ENCODE measurements at regions of chr11 and their contacts with region 1.

Region 1: GRCh38 chr11:113532697-113533424 is 57.7 kb upstream of the DRD2 start:
- DNase-seq: peak; percentile 55 to 88
- ATAC-seq: peak; percentile 86

Region 2: DNA sequence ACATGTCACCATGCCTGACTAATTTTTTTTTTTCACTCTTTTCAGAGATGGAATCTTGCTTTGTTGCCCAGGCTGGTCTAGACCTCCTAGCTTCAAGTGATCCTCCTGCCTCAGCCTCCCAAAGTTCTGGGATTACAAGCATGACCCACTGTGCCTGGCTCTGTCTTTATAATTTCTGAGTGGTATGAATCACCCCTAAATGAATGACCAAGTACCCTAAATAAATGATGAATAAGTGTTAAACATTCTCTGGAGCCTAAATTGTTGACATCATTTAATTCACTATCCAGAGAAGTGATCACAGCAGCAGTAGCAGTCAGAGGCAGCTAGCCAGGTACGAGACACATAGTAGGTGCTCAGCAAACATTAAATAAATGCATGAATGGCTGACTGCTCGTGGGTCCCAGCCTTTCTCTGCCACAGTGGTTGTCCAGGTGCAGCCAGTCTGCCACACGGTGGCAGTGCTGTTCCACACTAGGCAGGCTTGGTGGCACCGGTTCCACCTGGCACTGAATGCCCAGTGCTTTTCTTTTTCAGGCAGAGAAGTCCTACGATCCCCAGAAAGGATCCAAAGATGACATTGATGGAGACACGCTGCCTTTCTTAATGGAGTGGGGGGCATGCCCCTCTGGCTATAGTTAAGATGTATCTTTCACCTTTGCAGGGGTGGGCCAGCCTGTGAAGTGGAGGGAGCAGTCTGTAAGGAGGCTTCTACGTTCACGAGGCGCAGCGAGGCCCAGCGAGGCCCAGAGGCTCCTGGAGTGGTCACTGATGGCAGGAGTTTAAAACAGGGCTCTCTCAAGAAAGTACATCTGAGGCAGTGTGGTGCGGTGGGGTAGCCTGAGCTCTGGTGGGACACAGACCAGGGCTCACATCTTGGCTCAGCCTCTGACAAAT is 227.2 kb before region 1 on chr11:
- intact Hi-C with region 1: loop called in 1 of 2 experiments (anchors 5 kb)
- DNase-seq: peak; percentile 55 to 86
- ATAC-seq: peak; percentile 98

Region 3: GRCh38 chr11:113417428-113417827 is 115.4 kb before region 1 on chr11:
- intact Hi-C with region 1: no loop called
- DNase-seq: no peak
- ATAC-seq: no peak

Region 4: GRCh38 chr11:113447621-113448315 is 85.1 kb before region 1 on chr11:
- intact Hi-C with region 1: no loop called
- DNase-seq: no peak
- ATAC-seq: no peak

Region 5: DNA sequence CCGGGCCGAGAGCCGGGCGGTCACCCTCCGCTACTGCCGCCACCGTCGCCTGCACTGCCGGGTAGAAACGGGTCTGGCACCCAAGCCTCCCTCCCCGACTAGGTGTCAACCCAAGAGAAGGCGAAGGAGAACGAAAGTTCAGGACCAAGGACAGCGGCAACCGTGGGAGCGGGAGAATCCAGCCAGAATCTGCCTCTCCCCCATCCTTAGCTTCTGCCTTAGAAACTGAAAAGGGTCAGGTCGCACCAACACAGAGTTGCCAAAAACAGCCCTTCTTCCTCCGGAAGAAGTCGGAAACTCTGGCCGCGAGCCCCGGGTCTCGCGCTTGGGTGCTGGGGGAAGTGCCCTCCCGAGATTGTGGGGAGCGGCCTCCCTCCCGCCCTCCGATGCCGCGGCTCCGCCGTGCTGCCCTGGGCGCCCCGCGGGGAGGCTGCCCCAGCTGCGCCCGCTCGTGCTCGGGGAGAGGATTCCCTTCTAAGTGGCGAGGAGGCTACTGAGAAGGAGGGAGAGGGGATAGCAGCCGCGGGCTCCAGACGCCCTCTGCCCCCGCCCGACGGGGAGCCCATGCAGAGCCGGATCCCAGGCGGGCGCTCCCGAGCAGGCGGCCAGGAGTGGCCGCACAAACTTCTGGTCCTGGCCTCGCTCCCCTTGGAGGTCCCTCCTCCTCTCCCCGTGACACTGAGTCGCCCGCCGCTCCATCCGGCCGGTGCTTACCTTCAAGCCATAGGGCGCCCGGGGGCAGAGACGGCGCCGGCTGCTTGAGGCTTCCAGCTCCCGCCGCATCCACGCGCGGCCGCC is 58.3 kb before region 1 on chr11:
- intact Hi-C with region 1: loop called in 1 of 2 experiments (anchors 10 kb)
- DNase-seq: peak; percentile 63 to 79
- ATAC-seq: peak; percentile 89

Region 6: GRCh38 chr11:113730887-113731726 is 198.2 kb after region 1 on chr11:
- intact Hi-C with region 1: loop called in 1 of 2 experiments (anchors 10 kb)
- DNase-seq: peak in 1 of 2 donors; percentile 24
- ATAC-seq: peak; percentile 82

Measured in left colon (tissue), 2 donors.